B cell (primary cell): ENCODE measurements at regions of chr3 and their contacts with region 1.

Region 1: GRCh38 chr3:44510000-44510368 is 32.5 kb upstream of the ZNF445 start:
- DNase-seq: peak; percentile 73
- ATAC-seq: peak; percentile 32
- H3K4me3 ChIP-seq: peak overlapping the region; percentile 74 to 95 (median 88)
- H3K4me3 Mint-ChIP-seq: peak overlapping the region; percentile 90
- H3K27ac ChIP-seq: peak overlapping the region; percentile 88 to 94
- H3K27ac Mint-ChIP-seq: peak overlapping the region; percentile 97
- H3K4me1 ChIP-seq: peaks cover 19 to 25% of the 10 kb centered on the region in 2 donors
- H3K4me1 Mint-ChIP-seq: peaks cover 46% of the 10 kb centered on the region
- H3K27me3 ChIP-seq: no peaks in the 10 kb centered on the region
- H3K27me3 Mint-ChIP-seq: no peaks in the 10 kb centered on the region
- CTCF ChIP-seq: no peak

Region 2: GRCh38 chr3:43296565-43296964 is 1213.4 kb before region 1 on chr3:
- CTCF ChIA-PET with region 1: no interaction called
- POLR2A ChIA-PET with region 1: no interaction called
- intact Hi-C with region 1: no loop called
- DNase-seq: peak; percentile 70
- ATAC-seq: peak; percentile 99
- H3K4me3 ChIP-seq: peak overlapping the region in 4 of 5 experiments; percentile 26 to 52 (median 40)
- H3K4me3 Mint-ChIP-seq: peak overlapping the region; percentile 83
- H3K27ac ChIP-seq: peak overlapping the region; percentile 41 to 54
- H3K27ac Mint-ChIP-seq: peak overlapping the region; percentile 91
- H3K4me1 ChIP-seq: peaks cover 60 to 74% of the 10 kb centered on the region in 2 donors
- H3K4me1 Mint-ChIP-seq: peaks cover 66% of the 10 kb centered on the region
- H3K27me3 ChIP-seq: no peaks in the 10 kb centered on the region
- H3K27me3 Mint-ChIP-seq: no peaks in the 10 kb centered on the region
- CTCF ChIP-seq: no peak

Region 3: DNA sequence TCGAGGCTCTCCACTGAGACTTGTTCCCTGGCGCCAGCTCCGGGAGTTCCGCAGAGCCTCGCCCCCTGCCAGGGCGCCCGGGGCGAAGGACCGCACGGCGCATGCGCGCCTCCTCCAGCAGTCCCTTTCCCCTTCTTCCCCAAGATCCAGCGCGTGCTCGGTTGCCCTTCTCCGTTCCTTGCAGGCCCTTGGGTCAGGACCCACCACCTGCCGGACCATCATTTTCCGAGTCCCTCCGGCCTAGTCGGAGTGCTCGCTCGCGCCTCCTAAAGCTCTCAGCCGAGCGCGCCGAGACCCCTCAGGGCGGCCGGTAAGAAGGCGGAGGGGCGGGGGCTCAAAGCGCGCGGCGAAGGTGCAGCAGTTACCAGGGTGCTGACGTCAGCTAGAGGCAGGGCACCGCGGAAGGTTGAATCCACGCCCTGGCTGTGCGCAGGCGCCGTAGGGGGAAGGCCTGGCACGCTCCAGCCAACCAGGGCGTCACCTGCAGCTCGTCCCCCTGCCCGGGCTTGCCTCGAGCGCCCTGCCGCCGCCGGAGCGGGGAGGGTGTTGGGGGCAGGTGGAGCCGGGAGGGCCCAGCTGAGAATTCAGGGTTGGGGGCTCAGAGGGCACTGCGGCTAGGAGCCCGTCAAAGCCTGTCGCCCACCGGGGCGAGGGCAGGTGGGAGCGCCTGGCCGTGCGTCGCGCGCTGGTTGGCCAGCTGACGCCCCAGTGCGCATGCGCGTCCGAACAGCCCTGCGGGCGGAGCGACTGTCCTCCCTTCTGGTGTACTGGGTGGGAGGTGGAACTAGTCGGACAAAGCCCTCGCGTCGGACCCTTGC is 171.8 kb before region 1 on chr3 and contains the start of gene TCAIM:
- CTCF ChIA-PET with region 1: no interaction called
- POLR2A ChIA-PET with region 1: interaction called, 7 read pairs
- intact Hi-C with region 1: loop called (anchors 1 kb)
- DNase-seq: peak; percentile 100
- ATAC-seq: peak; percentile 90
- H3K4me3 ChIP-seq: peak within 1 kb of the TSS; percentile 85 to 97 (median 87)
- H3K4me3 Mint-ChIP-seq: peak within 1 kb of the TSS; percentile 99
- H3K27ac ChIP-seq: peak within 1 kb of the TSS; percentile 80 to 88
- H3K27ac Mint-ChIP-seq: peak within 1 kb of the TSS; percentile 99
- H3K4me1 ChIP-seq: peaks cover 16 to 19% of the 10 kb centered on the region in 2 donors
- H3K4me1 Mint-ChIP-seq: peaks cover 29% of the 10 kb centered on the region
- H3K27me3 ChIP-seq: no peaks in the 10 kb centered on the region
- H3K27me3 Mint-ChIP-seq: peaks cover 9% of the 10 kb centered on the region
- CTCF ChIP-seq: no peak
- total RNA-seq, gene TCAIM: 15.8 and 16.7 TPM in 2 replicates

Region 4: DNA sequence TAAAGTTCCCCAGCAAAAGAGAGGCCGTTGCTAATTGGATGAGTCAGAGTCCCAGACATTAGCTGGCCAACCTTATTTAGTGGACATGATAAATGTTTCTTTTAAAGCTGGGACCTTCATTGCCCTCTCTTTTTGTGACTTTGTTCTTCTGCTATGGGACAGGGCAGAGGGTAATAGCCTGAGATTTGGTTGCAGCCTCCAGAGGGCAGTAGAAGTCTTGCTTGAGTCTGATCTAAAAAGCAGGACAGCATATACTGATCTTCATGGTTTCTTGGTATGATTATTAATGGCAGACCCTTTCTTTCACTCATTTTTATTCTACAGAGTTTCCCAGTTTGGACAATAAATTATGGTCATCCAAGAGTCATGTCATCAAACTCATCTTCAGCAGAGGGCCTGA is 19.9 kb after region 1 on chr3:
- CTCF ChIA-PET with region 1: interaction called, 10 read pairs
- POLR2A ChIA-PET with region 1: interaction called, 3 read pairs
- intact Hi-C with region 1: no loop called
- DNase-seq: no peak
- ATAC-seq: no peak
- H3K4me3 ChIP-seq: no peak overlapping the region
- H3K4me3 Mint-ChIP-seq: no peak overlapping the region
- H3K27ac ChIP-seq: no peak overlapping the region
- H3K27ac Mint-ChIP-seq: no peak overlapping the region
- H3K4me1 ChIP-seq: no peaks in the 10 kb centered on the region
- H3K4me1 Mint-ChIP-seq: no peaks in the 10 kb centered on the region
- H3K27me3 ChIP-seq: peaks cover 0 to 16% (median 2%) of the 10 kb centered on the region in 4 experiments
- H3K27me3 Mint-ChIP-seq: peaks cover 28% of the 10 kb centered on the region
- CTCF ChIP-seq: no peak

Region 5: GRCh38 chr3:44648564-44649229 is 138.7 kb after region 1 on chr3 and contains the start of gene ZNF35:
- CTCF ChIA-PET with region 1: no interaction called
- POLR2A ChIA-PET with region 1: no interaction called
- intact Hi-C with region 1: loop called (anchors 2 kb)
- DNase-seq: peak; percentile 67
- ATAC-seq: peak; percentile 84
- H3K4me3 ChIP-seq: peak within 1 kb of the TSS; percentile 43 to 95 (median 86)
- H3K4me3 Mint-ChIP-seq: peak within 1 kb of the TSS; percentile 96
- H3K27ac ChIP-seq: peak within 1 kb of the TSS; percentile 27 to 74
- H3K27ac Mint-ChIP-seq: peak within 1 kb of the TSS; percentile 80
- H3K4me1 ChIP-seq: peaks cover 8 to 15% of the 10 kb centered on the region in 2 donors
- H3K4me1 Mint-ChIP-seq: peaks cover 23% of the 10 kb centered on the region
- H3K27me3 ChIP-seq: no peaks in the 10 kb centered on the region
- H3K27me3 Mint-ChIP-seq: no peaks in the 10 kb centered on the region
- CTCF ChIP-seq: no peak
- total RNA-seq, gene ZNF35: 12.1 and 16.6 TPM in 2 replicates

Region 6: DNA sequence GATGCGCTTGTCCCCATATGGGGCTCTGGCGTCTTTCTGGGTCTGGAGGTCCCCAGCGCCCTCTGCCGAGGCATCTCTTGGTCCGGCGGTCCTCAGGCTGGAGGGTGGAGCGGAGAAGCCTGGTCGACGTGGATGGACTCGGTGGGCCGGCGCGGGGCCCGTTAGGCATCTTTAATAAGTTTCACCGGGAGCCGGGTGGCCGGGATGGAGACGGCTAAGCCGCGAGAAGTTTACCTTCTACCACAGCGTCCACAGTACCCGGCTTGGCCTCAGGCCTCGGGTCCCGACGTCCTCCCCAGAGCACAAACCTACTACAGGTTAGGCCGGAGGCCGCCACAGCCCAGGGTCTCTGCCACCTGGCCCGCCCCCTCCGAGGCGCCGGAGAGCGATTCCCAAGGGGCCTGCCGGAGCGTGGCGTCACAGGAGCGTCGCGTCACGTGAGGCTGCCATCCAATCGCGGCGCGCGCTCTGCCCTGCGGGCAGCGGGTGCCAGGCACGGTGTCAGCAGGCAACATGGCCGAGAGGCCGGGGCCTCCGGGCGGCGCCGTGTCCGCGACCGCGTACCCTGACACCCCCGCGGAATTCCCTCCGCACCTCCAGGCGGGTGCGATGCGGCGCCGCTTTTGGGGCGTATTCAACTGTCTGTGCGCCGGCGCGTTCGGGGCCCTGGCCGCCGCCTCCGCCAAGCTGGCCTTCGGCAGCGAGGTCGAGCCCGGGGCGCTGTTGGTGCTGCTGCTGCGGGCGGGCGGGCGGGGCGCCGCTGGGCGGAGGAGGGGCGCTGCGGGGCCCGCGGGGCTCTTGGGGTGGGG is 351.6 kb after region 1 on chr3 and contains the start of gene TMEM42:
- CTCF ChIA-PET with region 1: no interaction called
- POLR2A ChIA-PET with region 1: no interaction called
- intact Hi-C with region 1: loop called (anchors 2 kb)
- DNase-seq: peak; percentile 95
- ATAC-seq: peak; percentile 93
- H3K4me3 ChIP-seq: peak within 1 kb of the TSS; percentile 60 to 93 (median 70)
- H3K4me3 Mint-ChIP-seq: peak within 1 kb of the TSS; percentile 91
- H3K27ac ChIP-seq: peak within 1 kb of the TSS; percentile 85 to 88
- H3K27ac Mint-ChIP-seq: peak within 1 kb of the TSS; percentile 91
- H3K4me1 ChIP-seq: peaks cover 7 to 13% of the 10 kb centered on the region in 2 donors
- H3K4me1 Mint-ChIP-seq: peaks cover 23% of the 10 kb centered on the region
- H3K27me3 ChIP-seq: no peaks in the 10 kb centered on the region
- H3K27me3 Mint-ChIP-seq: no peaks in the 10 kb centered on the region
- CTCF ChIP-seq: no peak
- total RNA-seq, gene TMEM42: 22.6 and 22.7 TPM in 2 replicates